SK-N-SH (cell line): ENCODE measurements at regions of chr17 and their contacts with region 1.

Region 1: GRCh38 chr17:48724251-48725003 is 1.4 kb downstream of the PRAC2 start:
- DNase-seq: peak; percentile 83
- H3K4me3 ChIP-seq: peak overlapping the region; percentile 21 to 42; a peak in 3 of 4 replicates
- H3K27ac ChIP-seq: no peak overlapping the region
- H3K4me1 ChIP-seq: no peaks in the 10 kb centered on the region
- H3K27me3 ChIP-seq: peaks cover 100% of the 10 kb centered on the region
- CTCF ChIP-seq: peak; percentile 97
- EP300 ChIP-seq: no peak
- RAD21 ChIP-seq: peak; percentile 82

Region 2: GRCh38 chr17:48463526-48463925 is 260.9 kb before region 1 on chr17:
- CTCF ChIA-PET with region 1: no interaction called
- POLR2A ChIA-PET with region 1: no interaction called
- DNase-seq: no peak
- H3K4me3 ChIP-seq: no peak overlapping the region
- H3K27ac ChIP-seq: no peak overlapping the region
- H3K4me1 ChIP-seq: no peaks in the 10 kb centered on the region
- H3K27me3 ChIP-seq: peaks cover 82% of the 10 kb centered on the region
- CTCF ChIP-seq: no peak
- EP300 ChIP-seq: no peak
- RAD21 ChIP-seq: no peak

Region 3: DNA sequence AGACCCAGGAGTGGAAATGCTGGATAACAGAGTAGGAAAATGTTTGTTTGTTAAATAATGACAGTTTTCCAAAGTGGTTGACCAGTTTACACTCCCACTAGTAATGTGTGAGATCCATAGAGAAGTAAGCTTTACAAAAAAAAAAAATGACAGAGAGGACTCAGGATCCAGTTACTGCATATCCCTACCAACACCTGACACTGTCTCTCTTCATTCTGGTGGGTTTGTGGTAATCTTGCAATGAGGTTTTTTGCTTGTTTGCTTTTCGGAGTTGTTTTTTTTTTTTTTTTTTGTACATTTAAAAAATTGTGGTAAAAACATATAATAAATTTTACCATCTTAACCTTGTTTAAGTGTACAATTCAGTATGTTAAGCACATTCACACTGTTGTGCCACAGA is 74.7 kb before region 1 on chr17:
- CTCF ChIA-PET with region 1: no interaction called
- POLR2A ChIA-PET with region 1: no interaction called
- DNase-seq: no peak
- H3K4me3 ChIP-seq: no peak overlapping the region
- H3K27ac ChIP-seq: no peak overlapping the region
- H3K4me1 ChIP-seq: no peaks in the 10 kb centered on the region
- H3K27me3 ChIP-seq: peaks cover 71% of the 10 kb centered on the region
- CTCF ChIP-seq: no peak
- EP300 ChIP-seq: no peak
- RAD21 ChIP-seq: no peak

Region 4: DNA sequence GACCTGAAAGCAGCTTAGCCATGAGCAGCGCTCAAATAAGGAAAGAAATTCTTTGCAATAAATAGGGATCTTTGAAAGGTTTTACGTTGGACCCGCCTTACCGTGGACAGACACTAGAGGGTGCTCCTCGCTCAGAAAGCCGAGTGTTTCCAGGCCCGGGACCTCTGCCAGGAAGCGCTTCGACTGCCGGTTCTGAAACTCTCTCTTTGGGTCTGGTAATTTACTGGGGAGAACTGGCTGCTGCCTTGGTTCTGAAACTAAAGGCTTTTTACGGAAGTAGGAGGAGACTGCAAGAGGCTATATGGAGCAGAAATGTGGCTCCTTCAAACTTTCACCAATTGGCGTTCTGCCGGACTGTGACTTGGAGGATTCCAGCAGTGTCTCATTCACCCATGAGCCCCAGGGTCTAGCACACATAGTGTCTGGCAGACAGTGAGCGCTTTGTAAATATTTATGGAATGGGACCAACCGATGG is 52.7 kb before region 1 on chr17:
- CTCF ChIA-PET with region 1: interaction called, 18 read pairs
- POLR2A ChIA-PET with region 1: no interaction called
- DNase-seq: peak; percentile 76
- H3K4me3 ChIP-seq: peak overlapping the region; percentile 35 to 62; a peak in 3 of 4 replicates
- H3K27ac ChIP-seq: no peak overlapping the region
- H3K4me1 ChIP-seq: no peaks in the 10 kb centered on the region
- H3K27me3 ChIP-seq: peaks cover 79% of the 10 kb centered on the region
- CTCF ChIP-seq: peak; percentile 99
- EP300 ChIP-seq: no peak
- RAD21 ChIP-seq: peak; percentile 86

Region 5: GRCh38 chr17:48704361-48705248 is 19.8 kb before region 1 on chr17:
- CTCF ChIA-PET with region 1: interaction called, 49 read pairs
- POLR2A ChIA-PET with region 1: no interaction called
- DNase-seq: no peak
- H3K4me3 ChIP-seq: no peak overlapping the region
- H3K27ac ChIP-seq: no peak overlapping the region
- H3K4me1 ChIP-seq: no peaks in the 10 kb centered on the region
- H3K27me3 ChIP-seq: peaks cover 99% of the 10 kb centered on the region
- CTCF ChIP-seq: no peak
- EP300 ChIP-seq: no peak
- RAD21 ChIP-seq: no peak

Region 6: GRCh38 chr17:48738803-48739526 is 14.5 kb after region 1 on chr17:
- CTCF ChIA-PET with region 1: interaction called, 38 read pairs
- POLR2A ChIA-PET with region 1: interaction called, 4 read pairs
- DNase-seq: no peak
- H3K4me3 ChIP-seq: no peak overlapping the region
- H3K27ac ChIP-seq: no peak overlapping the region
- H3K4me1 ChIP-seq: no peaks in the 10 kb centered on the region
- H3K27me3 ChIP-seq: peaks cover 98% of the 10 kb centered on the region
- CTCF ChIP-seq: no peak
- EP300 ChIP-seq: no peak
- RAD21 ChIP-seq: no peak

Region 7: DNA sequence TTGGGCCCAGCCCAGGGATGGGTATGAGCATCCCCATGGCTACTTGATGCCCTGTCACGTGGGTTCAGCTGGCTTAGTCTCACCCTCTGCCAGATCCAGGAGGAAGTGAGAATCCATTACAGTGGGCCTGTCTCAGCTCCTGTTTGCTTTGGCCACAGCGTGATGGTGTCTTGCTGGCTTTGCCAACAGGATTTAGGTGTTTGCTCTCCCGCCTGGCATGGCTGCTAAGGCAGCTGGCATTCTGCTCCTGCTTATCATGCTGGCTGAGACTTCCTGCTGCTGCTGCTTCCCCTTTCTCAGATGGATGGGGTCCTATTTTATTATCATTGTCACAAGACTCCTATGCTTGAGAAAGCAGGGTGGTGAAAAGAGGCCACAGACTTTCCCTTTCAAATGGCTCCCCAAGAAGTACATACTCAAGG is 32.4 kb after region 1 on chr17:
- CTCF ChIA-PET with region 1: interaction called, 29 read pairs
- POLR2A ChIA-PET with region 1: no interaction called
- DNase-seq: no peak
- H3K4me3 ChIP-seq: no peak overlapping the region
- H3K27ac ChIP-seq: no peak overlapping the region
- H3K4me1 ChIP-seq: no peaks in the 10 kb centered on the region
- H3K27me3 ChIP-seq: peaks cover 98% of the 10 kb centered on the region
- CTCF ChIP-seq: no peak
- EP300 ChIP-seq: no peak
- RAD21 ChIP-seq: no peak

Region 8: DNA sequence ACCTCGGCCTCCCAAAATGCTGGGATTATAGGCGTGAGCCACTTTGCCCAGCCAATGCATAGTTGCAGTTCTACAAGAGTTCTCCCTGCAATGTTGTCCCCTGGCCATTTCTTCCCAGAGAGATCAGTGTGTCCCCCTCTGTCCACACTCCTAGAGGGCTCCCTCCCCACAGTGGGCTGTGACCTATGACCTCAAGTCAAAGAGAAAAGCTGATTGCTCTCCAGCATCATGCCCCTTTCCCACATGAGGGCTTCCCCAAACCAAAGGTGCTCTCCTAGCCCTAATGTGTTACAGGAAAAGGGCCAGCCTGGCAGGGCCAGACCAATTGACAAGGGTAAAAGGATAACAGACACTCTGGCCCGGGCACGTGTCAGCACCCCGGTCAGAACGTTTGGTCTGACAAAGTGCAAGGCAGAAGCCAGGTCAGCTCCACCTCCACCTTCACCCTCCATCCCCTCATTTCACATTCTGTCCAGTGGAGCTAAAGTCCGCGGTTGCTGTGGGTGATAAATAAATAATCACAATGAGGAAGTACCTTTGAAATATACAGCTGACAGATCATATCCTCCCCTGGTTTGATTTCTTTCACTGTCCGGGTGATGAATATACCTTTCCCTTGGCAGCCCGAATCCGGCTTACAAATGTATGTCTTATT is 74.8 kb after region 1 on chr17:
- CTCF ChIA-PET with region 1: interaction called, 55 read pairs
- POLR2A ChIA-PET with region 1: no interaction called
- DNase-seq: no peak
- H3K4me3 ChIP-seq: no peak overlapping the region
- H3K27ac ChIP-seq: no peak overlapping the region
- H3K4me1 ChIP-seq: peaks cover 0 to 18% of the 10 kb centered on the region in 2 experiments; a peak in 2 of 4 replicates
- H3K27me3 ChIP-seq: 0 out of 2 replicates have a peak, but pooled peaks cover 3% of the 10 kb centered on the region
- CTCF ChIP-seq: no peak
- EP300 ChIP-seq: no peak
- RAD21 ChIP-seq: no peak

Region 9: GRCh38 chr17:48816774-48817590 is 92.6 kb after region 1 on chr17 and contains the start of gene TTLL6:
- CTCF ChIA-PET with region 1: interaction called, 11 read pairs
- POLR2A ChIA-PET with region 1: no interaction called
- DNase-seq: peak; percentile 97
- H3K4me3 ChIP-seq: peak within 1 kb of the TSS; percentile 45 to 62
- H3K27ac ChIP-seq: no peak within 1 kb of the TSS
- H3K4me1 ChIP-seq: peaks cover 0 to 9% of the 10 kb centered on the region in 2 experiments; a peak in 1 of 4 replicates
- H3K27me3 ChIP-seq: peaks cover 35% of the 10 kb centered on the region; the same call in 1 of the 2 replicates
- CTCF ChIP-seq: no peak
- EP300 ChIP-seq: no peak
- RAD21 ChIP-seq: no peak
- polyA plus RNA-seq, gene TTLL6: 3.1 and 5.1 TPM in 2 replicates

Region 10: DNA sequence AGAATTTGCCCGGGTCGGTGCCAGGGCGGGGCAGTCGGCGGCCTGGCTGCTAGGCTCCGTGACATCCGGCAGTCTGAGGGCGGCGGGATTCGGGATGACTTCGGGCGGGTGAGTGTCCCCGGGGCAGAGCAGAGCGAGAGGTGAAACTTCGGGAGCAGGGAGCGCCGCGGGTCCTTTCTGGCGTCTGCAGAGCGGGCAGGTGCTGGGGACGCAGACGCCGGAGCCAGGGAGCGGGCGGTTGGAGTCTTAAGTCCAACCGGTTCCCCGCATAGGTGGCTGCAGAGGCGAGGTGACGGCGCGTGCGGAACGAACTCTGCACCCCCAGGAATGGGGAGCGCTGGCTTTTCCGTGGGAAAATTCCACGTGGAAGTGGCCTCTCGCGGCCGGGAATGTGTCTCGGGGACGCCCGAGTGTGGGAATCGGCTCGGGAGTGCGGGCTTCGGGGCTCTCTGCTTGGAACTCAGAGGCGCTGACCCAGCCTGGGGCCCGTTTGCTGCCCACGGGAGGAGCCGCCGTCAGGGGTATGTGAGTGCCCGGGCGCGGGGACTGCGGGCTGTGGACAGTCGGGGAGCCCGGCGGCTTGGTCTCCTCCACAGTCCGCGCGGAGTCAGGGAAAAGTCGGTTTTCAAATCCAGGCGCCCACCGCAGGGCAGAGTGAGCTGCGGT is 408.4 kb after region 1 on chr17 and contains the start of gene B4GALNT2:
- CTCF ChIA-PET with region 1: no interaction called
- POLR2A ChIA-PET with region 1: no interaction called
- DNase-seq: peak; percentile 39
- H3K4me3 ChIP-seq: no peak within 1 kb of the TSS
- H3K27ac ChIP-seq: no peak within 1 kb of the TSS
- H3K4me1 ChIP-seq: no peaks in the 10 kb centered on the region
- H3K27me3 ChIP-seq: peaks cover 89% of the 10 kb centered on the region
- CTCF ChIP-seq: no peak
- EP300 ChIP-seq: no peak
- RAD21 ChIP-seq: no peak
- polyA plus RNA-seq, gene B4GALNT2: not detected in 2 replicates